ENCODE measurements at regions of chr10 and their contacts with region 1.

Region 1: DNA sequence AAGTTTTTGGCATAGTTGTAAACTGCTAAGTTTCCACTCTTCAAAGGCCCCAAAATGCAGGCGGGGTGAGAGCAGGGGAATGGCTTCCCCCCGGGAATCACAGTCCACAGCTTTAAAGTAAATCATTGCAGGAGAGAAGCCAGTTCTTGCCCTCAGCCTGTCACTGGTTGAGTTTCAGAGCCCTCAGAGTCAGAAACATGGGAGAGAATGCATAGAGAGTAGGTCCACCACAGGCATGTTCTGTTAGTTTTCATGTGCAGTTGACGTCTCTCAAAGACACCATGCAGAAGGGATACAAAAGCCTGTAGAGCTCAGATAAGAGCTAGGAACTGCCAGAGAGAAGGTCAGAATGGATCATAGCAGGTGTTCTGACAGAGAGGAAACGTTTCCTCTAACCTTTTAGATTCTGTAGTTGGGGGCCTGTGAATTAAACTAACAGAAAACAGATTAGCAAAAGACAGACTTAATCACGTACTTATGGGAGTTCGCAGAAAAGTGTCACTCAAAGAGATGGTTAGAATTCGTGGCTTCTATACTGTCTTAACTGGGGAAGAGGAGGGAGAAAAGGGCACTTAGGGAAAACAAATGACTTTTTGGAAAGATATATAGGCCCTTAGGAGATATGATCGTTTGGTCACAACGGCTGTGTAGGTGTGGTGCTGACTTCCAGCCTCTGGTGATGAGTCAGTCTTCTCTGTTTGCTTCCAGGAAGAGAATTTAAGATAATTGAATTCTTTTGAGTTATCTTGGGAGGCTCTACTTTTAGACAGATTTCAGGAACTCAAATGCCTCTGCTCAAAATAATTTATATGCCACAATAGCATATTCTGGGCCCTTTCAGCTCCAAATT is 48.0 kb upstream of the MSRB2 start:
- DNase-seq: no peak
- H3K4me3 ChIP-seq: no peak overlapping the region
- H3K27ac ChIP-seq: no peak overlapping the region
- H3K4me1 ChIP-seq: peaks cover 0 to 7% (median 0%) of the 10 kb centered on the region in 4 experiments; a peak in 1 of 7 replicates
- H3K27me3 ChIP-seq: no peaks in the 10 kb centered on the region
- CTCF ChIP-seq: no peak
- EP300 ChIP-seq: no peak
- POLR2A ChIP-seq: no peak
- RAD21 ChIP-seq: no peak

Region 2: GRCh38 chr10:22894714-22895113 is 152.7 kb before region 1 on chr10:
- CTCF ChIA-PET with region 1: no interaction called
- POLR2A ChIA-PET with region 1: no interaction called
- DNase-seq: no peak
- H3K4me3 ChIP-seq: no peak overlapping the region
- H3K27ac ChIP-seq: no peak overlapping the region
- H3K4me1 ChIP-seq: no peaks in the 10 kb centered on the region; a peak in 1 of 7 replicates
- H3K27me3 ChIP-seq: no peaks in the 10 kb centered on the region
- CTCF ChIP-seq: no peak
- EP300 ChIP-seq: no peak
- POLR2A ChIP-seq: no peak
- RAD21 ChIP-seq: no peak

Region 3: GRCh38 chr10:22931948-22932347 is 115.5 kb before region 1 on chr10:
- CTCF ChIA-PET with region 1: no interaction called
- POLR2A ChIA-PET with region 1: no interaction called
- DNase-seq: no peak
- H3K4me3 ChIP-seq: no peak overlapping the region
- H3K27ac ChIP-seq: no peak overlapping the region
- H3K4me1 ChIP-seq: peaks cover 0 to 6% (median 3%) of the 10 kb centered on the region in 4 experiments; a peak in 4 of 7 replicates
- H3K27me3 ChIP-seq: peaks cover 0 to 11% (median 7%) of the 10 kb centered on the region in 4 experiments; a peak in 6 of 7 replicates
- CTCF ChIP-seq: no peak
- EP300 ChIP-seq: no peak
- POLR2A ChIP-seq: no peak
- RAD21 ChIP-seq: no peak

Region 4: GRCh38 chr10:22992075-22992474 is 55.4 kb before region 1 on chr10:
- CTCF ChIA-PET with region 1: no interaction called
- POLR2A ChIA-PET with region 1: no interaction called
- DNase-seq: no peak
- H3K4me3 ChIP-seq: no peak overlapping the region
- H3K27ac ChIP-seq: no peak overlapping the region
- H3K4me1 ChIP-seq: peaks cover 0 to 5% (median 1%) of the 10 kb centered on the region in 4 experiments; a peak in 2 of 7 replicates
- H3K27me3 ChIP-seq: no peaks in the 10 kb centered on the region
- CTCF ChIP-seq: no peak
- EP300 ChIP-seq: no peak
- POLR2A ChIP-seq: no peak
- RAD21 ChIP-seq: no peak

Region 5: GRCh38 chr10:23035569-23035968 is 11.9 kb before region 1 on chr10:
- CTCF ChIA-PET with region 1: interaction called, 22 read pairs
- POLR2A ChIA-PET with region 1: no interaction called
- DNase-seq: peak in 1 of 2 experiments; percentile 13
- H3K4me3 ChIP-seq: no peak overlapping the region
- H3K27ac ChIP-seq: no peak overlapping the region
- H3K4me1 ChIP-seq: no peaks in the 10 kb centered on the region
- H3K27me3 ChIP-seq: no peaks in the 10 kb centered on the region
- CTCF ChIP-seq: peak; percentile 45 to 96 (median 75)
- EP300 ChIP-seq: no peak
- POLR2A ChIP-seq: no peak
- RAD21 ChIP-seq: peak; percentile 54 to 67